Naive thymus-derived CD8-positive, alpha-beta T cell (primary cell): ENCODE measurements at regions of chr20 and their contacts with region 1.

Region 1: DNA sequence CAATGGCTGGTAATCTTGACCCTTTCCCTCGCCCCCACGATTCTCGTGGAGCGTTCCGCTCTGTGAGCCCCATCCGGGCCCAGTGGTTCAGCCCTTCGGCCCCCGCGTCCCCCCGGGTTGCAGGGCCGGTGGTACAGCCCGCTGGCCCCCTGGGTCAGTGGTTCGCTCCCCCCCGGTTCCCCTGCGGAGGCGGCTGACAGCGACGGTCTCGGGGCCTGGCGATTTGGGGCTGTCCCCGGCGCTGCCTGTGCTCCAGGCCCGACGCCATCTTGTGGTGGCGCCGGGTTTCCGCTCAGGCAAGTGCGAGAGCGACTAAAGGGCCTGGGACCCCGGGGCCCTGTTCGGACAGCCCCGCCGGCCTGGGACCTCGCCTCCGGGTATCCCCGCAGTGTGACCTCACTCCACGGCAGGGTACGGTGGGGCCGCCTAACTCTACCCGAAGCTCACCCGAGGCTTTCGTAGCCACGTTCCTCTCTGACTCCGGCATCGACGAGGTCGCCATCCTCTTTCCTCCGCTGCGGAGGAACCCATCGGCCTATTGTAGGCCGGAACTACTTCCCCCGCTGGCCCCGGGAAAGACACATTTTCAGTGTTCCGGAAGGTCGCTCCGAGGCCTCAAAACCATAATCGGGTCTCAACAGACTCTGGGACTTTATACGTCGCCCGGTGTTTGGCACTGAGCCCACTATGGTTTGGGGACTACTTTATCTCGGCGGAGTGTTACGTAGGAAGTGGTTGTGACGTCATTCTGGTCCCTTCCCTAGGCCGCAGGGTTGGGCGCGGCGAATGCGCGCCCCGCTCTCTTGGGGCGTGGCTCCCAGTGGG is at the start of gene ZNF335:
- DNase-seq: peak; percentile 86 to 100 (median 94)
- ATAC-seq: peak; percentile 79 to 83
- H3K4me3 Mint-ChIP-seq: peak within 1 kb of the TSS; percentile 89 to 98 (median 95)
- H3K27ac Mint-ChIP-seq: peak within 1 kb of the TSS; percentile 99 to 100 (median 100)
- H3K4me1 Mint-ChIP-seq: peaks cover 12 to 26% (median 23%) of the 10 kb centered on the region in 4 donors
- H3K27me3 Mint-ChIP-seq: peaks cover 0 to 5% (median 0%) of the 10 kb centered on the region in 5 donors
- polyA plus RNA-seq, gene ZNF335: 6.4 to 13.2 (median 7.8) TPM

Region 2: GRCh38 chr20:45880988-45881788 is 90.7 kb before region 1 on chr20 and contains the start of gene ZSWIM1:
- POLR2A ChIA-PET with region 1: interaction called, 30 read pairs
- DNase-seq: peak; percentile 91 to 99 (median 98)
- ATAC-seq: peak; percentile 99 to 100
- H3K4me3 Mint-ChIP-seq: peak within 1 kb of the TSS; percentile 87 to 96 (median 91)
- H3K27ac Mint-ChIP-seq: peak within 1 kb of the TSS; percentile 86 to 98 (median 96)
- H3K4me1 Mint-ChIP-seq: peaks cover 20 to 45% (median 39%) of the 10 kb centered on the region in 4 donors
- H3K27me3 Mint-ChIP-seq: no peaks in the 10 kb centered on the region
- polyA plus RNA-seq, gene ZSWIM1: 0.96 to 9.8 (median 1.7) TPM

Region 3: DNA sequence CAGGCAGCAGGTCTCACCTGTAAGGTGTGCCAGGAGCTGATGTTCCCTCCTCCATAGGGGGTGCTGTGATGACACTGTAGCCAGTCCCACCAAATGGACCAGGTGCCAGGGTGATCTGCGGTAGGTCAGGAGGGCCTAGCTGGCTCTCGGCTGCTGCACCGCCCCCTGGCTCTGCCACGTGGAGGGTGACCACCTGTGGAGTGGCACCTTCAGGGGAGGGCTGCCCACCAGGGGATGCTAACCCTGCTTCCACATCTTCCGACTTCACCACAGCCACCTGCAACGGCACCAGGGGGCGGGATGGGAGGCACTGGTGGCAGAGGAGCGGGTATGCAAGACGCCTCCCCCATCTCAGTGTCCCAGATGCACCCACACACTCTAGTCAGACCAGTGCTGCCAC is 18.2 kb before region 1 on chr20:
- POLR2A ChIA-PET with region 1: interaction called, 23 read pairs
- DNase-seq: no peak
- ATAC-seq: no peak
- H3K4me3 Mint-ChIP-seq: no peak overlapping the region
- H3K27ac Mint-ChIP-seq: peak overlapping the region in 5 of 10 donors; percentile 35 to 79 (median 60)
- H3K4me1 Mint-ChIP-seq: peaks cover 0 to 8% (median under 1%) of the 10 kb centered on the region in 4 donors
- H3K27me3 Mint-ChIP-seq: no peaks in the 10 kb centered on the region